ENCODE measurements at regions of chr11 and their contacts with region 1.

Region 1: GRCh38 chr11:575996-576768 is at the start of gene PHRF1:
- DNase-seq: peak; percentile 87
- ATAC-seq: peak; percentile 94
- H3K4me3 ChIP-seq: peak within 1 kb of the TSS; percentile 83 to 96
- H3K27ac ChIP-seq: peak within 1 kb of the TSS; percentile 95
- H3K4me1 ChIP-seq: peaks cover 37% of the 10 kb centered on the region
- H3K27me3 ChIP-seq: no peaks in the 10 kb centered on the region
- CTCF ChIP-seq: no peak
- total RNA-seq, gene PHRF1: 90.6 TPM

Region 2: DNA sequence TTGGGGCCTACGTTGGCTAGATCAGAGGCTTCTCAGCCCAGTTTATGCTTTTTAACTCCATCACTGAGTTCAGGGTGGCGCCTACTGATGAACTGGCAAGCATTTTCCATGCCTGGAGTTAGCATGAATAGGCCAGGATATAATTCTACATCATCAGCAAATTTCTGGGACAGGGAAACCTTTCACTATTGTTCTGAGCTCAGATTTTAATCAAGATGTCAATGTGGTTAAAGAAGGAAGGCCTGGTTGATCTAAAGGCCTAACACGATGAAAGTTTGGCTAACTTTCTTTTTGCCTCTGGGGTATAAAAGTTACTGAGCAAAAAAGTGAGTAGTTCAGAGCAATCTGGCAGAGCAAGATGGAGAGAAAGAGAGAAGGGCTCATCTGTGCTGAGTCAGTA is 233.9 kb before region 1 on chr11:
- CTCF ChIA-PET with region 1: no interaction called
- POLR2A ChIA-PET with region 1: no interaction called
- in situ Hi-C with region 1: no loop called
- intact Hi-C with region 1: no loop called
- DNase-seq: no peak
- ATAC-seq: no peak
- H3K4me3 ChIP-seq: no peak overlapping the region
- H3K27ac ChIP-seq: no peak overlapping the region
- H3K4me1 ChIP-seq: no peaks in the 10 kb centered on the region
- H3K27me3 ChIP-seq: no peaks in the 10 kb centered on the region
- CTCF ChIP-seq: no peak

Region 3: GRCh38 chr11:355581-356458 is 220.4 kb before region 1 on chr11:
- CTCF ChIA-PET with region 1: no interaction called
- POLR2A ChIA-PET with region 1: no interaction called
- in situ Hi-C with region 1: no loop called
- intact Hi-C with region 1: no loop called
- DNase-seq: peak; percentile 51
- ATAC-seq: peak; percentile 91
- H3K4me3 ChIP-seq: peak overlapping the region; percentile 24 to 42
- H3K27ac ChIP-seq: peak overlapping the region; percentile 99
- H3K4me1 ChIP-seq: peaks cover 35% of the 10 kb centered on the region
- H3K27me3 ChIP-seq: no peaks in the 10 kb centered on the region
- CTCF ChIP-seq: no peak

Region 4: DNA sequence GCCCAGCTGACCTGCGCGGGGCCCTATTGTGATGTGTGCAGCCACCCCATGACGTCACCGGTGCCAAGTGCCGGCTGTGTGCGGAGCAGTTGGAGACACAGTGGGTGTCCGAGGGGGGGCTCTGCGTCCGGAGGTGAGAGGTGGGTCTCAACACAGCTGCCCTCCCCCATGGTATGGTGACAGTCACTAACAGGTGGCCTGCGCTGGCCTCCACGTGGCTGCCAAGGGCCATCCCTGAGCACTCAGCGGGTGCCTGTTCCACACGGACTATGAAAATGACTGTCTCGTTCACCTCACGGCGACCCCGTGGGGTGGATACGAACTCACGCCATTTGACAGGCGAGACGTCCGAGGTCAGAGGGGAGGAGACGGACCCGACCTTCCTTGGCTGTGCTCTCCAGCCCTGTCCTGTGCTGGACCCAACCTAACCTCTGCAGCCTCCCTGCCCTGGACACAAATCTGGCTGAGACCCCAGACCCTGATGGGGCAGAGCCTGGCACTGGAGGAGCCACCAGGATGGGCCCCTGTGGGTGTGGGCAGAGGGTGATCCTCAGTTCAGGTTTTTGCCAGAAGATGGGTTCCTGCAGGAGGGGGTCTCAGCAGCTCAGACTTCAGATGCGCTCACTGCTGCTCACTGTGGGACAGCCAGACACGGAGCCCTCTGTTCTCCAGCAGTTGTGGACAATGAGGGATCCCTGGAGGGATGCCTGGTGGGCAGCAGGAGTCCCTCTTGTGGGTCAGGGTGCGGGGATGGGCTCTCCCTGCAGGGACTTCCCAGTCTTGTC is 47.2 kb before region 1 on chr11:
- CTCF ChIA-PET with region 1: no interaction called
- POLR2A ChIA-PET with region 1: no interaction called
- in situ Hi-C with region 1: no loop called
- intact Hi-C with region 1: no loop called
- DNase-seq: no peak
- ATAC-seq: 0 out of 2 replicates have a peak, but pooled peaks have one; percentile 3
- H3K4me3 ChIP-seq: no peak overlapping the region
- H3K27ac ChIP-seq: no peak overlapping the region
- H3K4me1 ChIP-seq: peaks cover 10% of the 10 kb centered on the region
- H3K27me3 ChIP-seq: no peaks in the 10 kb centered on the region
- CTCF ChIP-seq: no peak

Region 5: DNA sequence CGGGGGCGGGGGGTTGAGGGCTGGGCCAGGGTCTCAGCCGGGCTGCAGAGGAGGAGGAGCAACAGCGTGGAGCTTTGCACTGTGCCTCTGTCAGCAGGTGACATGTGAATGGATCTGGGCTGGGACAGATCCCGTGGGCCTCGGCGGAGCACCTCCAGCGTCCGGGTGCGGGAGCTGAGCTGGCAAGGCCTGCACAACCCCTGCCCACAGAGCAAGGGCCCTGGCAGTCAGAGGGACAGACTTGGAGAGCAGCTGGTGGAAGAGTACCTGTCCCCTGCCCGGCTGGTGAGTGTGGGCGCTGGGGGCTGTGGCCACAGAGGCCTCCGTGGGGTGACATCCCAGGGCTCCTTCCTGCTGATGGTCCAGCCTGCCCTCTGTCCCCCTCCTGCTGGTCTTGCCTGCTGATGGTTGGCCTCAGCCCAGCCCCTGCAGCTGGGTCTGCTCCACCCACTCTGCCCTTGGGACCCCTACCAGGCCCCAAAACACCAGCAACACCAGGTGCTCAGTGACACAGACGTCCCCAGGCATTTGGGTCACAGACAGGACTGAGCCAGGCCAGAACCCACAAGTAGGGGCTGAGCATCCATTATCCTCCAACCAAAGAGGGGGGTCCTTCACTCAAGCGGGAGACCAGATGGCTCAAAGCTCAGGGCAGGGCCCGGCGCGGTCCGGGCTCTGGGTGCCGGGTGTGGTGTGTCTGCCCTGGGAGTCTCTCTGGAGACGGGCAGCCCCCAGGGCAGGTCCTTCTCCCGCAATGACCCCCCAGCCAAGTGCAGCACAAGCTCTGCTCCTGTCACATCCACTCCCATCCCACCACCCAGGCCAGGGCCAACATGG is 35.4 kb before region 1 on chr11:
- CTCF ChIA-PET with region 1: no interaction called
- POLR2A ChIA-PET with region 1: no interaction called
- in situ Hi-C with region 1: no loop called
- intact Hi-C with region 1: no loop called
- DNase-seq: no peak
- ATAC-seq: no peak
- H3K4me3 ChIP-seq: no peak overlapping the region
- H3K27ac ChIP-seq: no peak overlapping the region
- H3K4me1 ChIP-seq: peaks cover 20% of the 10 kb centered on the region
- H3K27me3 ChIP-seq: no peaks in the 10 kb centered on the region
- CTCF ChIP-seq: no peak

Region 6: DNA sequence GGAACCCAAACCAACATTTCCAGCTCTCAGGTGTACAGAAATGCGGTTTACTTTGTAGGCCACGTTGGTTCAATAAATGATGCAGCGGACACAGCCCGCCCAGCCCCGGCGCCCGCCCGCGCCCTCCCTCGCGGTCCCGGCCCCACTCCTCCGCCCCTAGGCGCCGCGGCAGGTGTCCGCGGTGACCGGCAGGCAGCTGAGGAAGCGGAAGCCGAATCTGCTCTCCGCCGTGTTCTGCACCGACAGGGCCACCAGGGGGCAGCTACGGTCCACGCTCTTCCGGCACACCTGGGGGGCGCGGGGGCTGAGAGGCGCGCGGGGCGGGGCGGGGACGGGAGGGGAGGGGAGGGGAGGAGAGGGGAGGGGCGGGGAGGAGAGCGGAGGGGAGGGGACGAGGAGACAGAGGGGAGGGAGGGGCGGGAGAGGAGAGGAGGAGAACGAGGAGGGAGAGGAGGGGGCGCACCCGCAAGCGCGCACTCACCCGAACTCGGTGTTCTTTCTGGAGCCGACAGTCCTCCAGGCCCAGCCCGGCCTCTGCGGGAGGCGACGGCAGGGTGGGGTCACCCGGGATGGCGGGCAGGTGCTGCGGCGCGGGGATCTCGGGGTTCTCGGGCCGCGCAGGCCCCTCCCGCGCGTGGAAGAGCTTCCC is 21.2 kb before region 1 on chr11:
- CTCF ChIA-PET with region 1: interaction called, 10 read pairs
- POLR2A ChIA-PET with region 1: no interaction called
- in situ Hi-C with region 1: no loop called
- intact Hi-C with region 1: no loop called
- DNase-seq: no peak
- ATAC-seq: peak; percentile 68
- H3K4me3 ChIP-seq: peak overlapping the region; percentile 57 to 59
- H3K27ac ChIP-seq: peak overlapping the region; percentile 66
- H3K4me1 ChIP-seq: peaks cover 26% of the 10 kb centered on the region
- H3K27me3 ChIP-seq: no peaks in the 10 kb centered on the region
- CTCF ChIP-seq: no peak; the same call in 1 of the 2 replicates

Region 7: DNA sequence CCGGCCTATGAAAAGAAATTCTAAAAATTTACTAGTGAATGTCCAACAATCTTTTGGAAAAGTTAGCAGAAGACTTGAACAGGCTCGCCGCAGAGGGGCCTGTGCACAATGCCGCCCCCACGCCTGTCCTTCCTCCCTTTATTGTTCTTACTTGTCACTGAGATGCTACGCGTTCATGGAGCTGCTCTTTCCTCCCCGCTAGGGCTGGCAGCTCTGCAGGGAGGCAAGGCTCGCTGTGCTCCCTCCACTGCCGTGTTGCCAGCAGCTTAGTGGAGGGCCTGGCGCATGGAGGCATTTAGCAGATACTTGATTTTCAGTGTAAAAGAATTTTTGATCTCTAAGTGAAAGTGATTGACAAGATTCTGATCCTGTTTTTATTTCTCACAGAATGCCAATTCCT is 14.8 kb after region 1 on chr11:
- CTCF ChIA-PET with region 1: no interaction called
- POLR2A ChIA-PET with region 1: interaction called, 11 read pairs
- in situ Hi-C with region 1: no loop called
- intact Hi-C with region 1: no loop called
- DNase-seq: no peak
- ATAC-seq: no peak
- H3K4me3 ChIP-seq: no peak overlapping the region
- H3K27ac ChIP-seq: no peak overlapping the region
- H3K4me1 ChIP-seq: no peaks in the 10 kb centered on the region
- H3K27me3 ChIP-seq: no peaks in the 10 kb centered on the region
- CTCF ChIP-seq: no peak